Motor neuron (in vitro differentiated cells): ENCODE measurements at regions of chr11 and their contacts with region 1.

Region 1: DNA sequence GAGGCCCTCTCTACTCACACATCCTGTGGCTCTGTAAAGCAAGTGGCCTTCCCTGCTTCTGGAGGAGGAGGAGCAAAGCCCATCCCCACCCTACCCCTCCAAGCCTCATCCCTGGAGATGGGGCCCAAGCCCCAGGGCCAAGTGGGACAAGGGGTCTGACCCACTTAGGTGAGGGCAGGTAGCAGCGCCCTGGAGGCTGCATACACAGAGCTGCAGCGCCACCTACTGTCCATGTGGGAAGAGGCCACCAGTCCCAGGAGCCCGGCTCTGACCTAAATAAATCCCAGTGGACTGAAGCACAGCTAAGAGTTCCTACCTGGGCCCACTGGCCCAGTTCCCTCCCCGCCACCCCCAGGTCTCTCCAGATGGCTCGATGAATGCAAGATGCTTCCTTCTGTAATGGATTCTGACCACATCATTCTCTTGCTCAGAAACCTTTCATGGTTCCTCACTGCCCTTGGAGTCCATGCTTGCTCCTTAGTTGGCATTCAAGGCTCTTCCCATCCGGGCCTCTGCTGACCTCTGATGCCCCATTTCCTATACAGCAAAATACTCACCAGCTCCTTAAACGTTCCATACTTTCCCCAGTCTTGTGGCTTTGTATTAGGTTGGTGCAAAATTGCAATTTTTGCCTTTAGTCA is 62.1 kb downstream of the THAP12 start:
- ATAC-seq: peak; percentile 67 to 99 (median 88)
- H3K4me3 ChIP-seq: no peak overlapping the region
- H3K27ac ChIP-seq: no peak overlapping the region
- H3K4me1 ChIP-seq: peaks cover 0 to 21% of the 10 kb centered on the region in 2 donors

Region 2: DNA sequence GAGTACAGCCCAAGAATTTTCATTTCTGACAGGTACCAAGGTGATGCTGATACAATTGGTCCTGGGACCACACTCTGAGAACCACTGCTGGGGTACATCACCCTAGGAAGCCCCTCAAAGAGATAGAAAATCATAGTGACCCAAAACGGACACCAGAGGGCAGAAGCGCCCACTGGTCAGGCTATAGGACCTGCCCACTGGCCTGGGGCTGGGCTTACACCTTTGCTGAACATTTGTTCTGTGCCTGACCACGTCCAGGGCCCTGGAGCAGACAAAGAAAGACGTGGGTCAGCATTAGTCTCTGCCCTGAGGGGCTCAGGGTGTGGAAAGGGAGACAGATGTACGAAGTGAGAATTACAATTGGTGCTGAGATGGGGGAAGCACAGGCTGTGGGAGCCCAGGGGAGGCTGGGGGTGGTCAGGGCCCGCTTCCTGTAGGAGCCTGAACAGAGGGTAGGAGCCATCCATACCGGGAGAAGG is 771.2 kb before region 1 on chr11:
- in situ Hi-C with region 1: loop called in 1 of 9 experiments (anchors 10 kb)
- ATAC-seq: peak; percentile 89 to 98 (median 96)
- H3K4me3 ChIP-seq: no peak overlapping the region
- H3K27ac ChIP-seq: peak overlapping the region; percentile 31 to 54
- H3K4me1 ChIP-seq: peaks cover 4% of the 10 kb centered on the region in 2 donors

Region 3: GRCh38 chr11:75879737-75880136 is 439.1 kb before region 1 on chr11:
- in situ Hi-C with region 1: loop called in 7 of 9 experiments (anchors 10 to 25 kb)
- ATAC-seq: no peak
- H3K4me3 ChIP-seq: no peak overlapping the region
- H3K27ac ChIP-seq: no peak overlapping the region
- H3K4me1 ChIP-seq: no peaks in the 10 kb centered on the region

Region 4: GRCh38 chr11:75896843-75897419 is 421.9 kb before region 1 on chr11:
- in situ Hi-C with region 1: loop called in 6 of 9 experiments (anchors 25 kb)
- ATAC-seq: peak in 2 of 8 experiments; percentile 28 to 37
- H3K4me3 ChIP-seq: no peak overlapping the region
- H3K27ac ChIP-seq: no peak overlapping the region
- H3K4me1 ChIP-seq: no peaks in the 10 kb centered on the region

Region 5: DNA sequence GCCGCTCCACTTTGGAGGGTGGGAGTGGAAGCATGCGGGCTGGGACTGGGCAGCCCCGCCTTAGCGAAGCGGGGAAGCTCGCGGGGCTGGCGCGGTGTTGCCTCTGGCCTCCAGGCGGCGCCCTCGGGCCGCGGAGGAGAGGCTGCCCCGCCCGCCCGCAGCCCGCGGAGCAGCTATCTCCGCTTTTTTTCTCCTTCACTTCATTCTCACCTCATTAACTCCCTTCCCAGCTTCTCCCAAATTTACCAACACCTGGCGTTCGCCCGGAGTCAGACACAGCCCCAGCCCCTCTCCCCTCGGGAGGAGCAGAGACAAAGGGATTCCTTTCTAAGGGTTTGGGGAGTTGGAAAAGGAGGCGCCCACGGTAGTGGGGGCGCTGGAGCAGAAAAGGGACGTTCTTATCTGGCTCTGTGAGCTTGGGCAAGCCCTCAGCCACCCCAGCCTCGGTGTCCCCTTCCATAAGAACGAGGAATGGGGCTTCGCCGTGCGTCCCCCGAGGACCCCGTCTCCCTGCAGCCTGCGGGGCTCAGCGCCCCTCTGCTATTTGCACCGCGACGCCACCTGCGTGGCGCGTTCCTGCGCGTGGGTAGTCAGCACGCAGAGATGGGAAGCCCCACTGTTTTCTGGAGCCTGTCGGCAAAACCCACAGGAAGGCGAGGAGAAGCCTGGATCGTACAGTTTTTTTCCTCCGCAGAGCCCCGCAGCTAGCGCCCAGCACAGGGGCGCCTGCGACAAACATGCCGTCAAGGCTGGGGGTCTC is 111.0 kb before region 1 on chr11:
- in situ Hi-C with region 1: loop called in 3 of 9 experiments (anchors 10 to 25 kb)
- ATAC-seq: peak; percentile 35 to 57 (median 42)
- H3K4me3 ChIP-seq: peak overlapping the region; percentile 16 to 50 (median 42)
- H3K27ac ChIP-seq: no peak overlapping the region
- H3K4me1 ChIP-seq: peaks cover 0 to 10% of the 10 kb centered on the region in 2 donors

Region 6: GRCh38 chr11:76248210-76248609 is 70.7 kb before region 1 on chr11:
- in situ Hi-C with region 1: no loop called
- ATAC-seq: peak in 1 of 8 experiments; percentile 41
- H3K4me3 ChIP-seq: no peak overlapping the region
- H3K27ac ChIP-seq: no peak overlapping the region
- H3K4me1 ChIP-seq: peaks cover 12 to 16% of the 10 kb centered on the region in 2 donors